Testis (tissue), 5 donors: ENCODE measurements at regions of chr11 and their contacts with region 1.

Region 1: GRCh38 chr11:119356349-119357031 is 10.0 kb upstream of the MFRP start:
- DNase-seq: peak; percentile 89
- H3K4me3 ChIP-seq: peak overlapping the region; percentile 39 to 63
- H3K27ac ChIP-seq: peak overlapping the region; percentile 27 to 69
- H3K4me1 ChIP-seq: peaks cover 21% of the 10 kb centered on the region
- H3K27me3 ChIP-seq: no peaks in the 10 kb centered on the region
- CTCF ChIP-seq: peak; percentile 84 to 88 (median 85)
- POLR2A ChIP-seq: no peak

Region 2: DNA sequence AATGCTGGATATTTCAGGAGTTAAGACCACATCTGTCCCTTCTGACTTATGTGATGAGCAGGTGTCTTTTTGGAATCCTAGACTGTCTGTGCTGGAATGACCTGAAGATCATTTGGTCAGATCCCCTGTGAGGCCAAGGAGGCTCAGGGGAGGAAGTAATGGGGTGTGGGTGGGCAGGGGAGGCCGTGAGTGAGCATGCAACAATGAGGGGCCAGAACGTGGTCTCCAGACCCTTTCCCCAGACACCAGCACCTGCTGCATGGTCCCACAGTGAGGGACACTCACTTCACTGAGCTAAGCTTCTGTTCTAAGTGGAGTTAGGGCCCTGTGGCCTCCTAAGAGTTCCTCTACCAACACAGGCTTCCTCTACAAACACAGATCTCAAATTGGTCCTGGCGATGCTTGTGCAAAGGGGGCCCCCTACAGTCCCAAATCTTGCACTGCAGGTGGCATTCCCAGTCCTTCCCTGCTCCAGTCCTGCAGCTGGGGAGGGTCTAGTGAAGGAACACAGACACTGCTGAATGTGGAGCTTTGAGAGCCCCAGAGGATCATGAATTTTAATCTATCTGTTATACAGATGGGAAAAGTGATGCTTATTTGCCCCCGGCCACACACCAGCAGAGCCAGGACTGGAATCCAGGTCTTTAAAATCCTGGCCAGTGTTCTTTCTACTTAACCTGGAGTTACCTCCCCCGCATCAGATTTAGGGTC is 17.6 kb after region 1 on chr11:
- intact Hi-C with region 1: loop called (anchors 2 kb)
- DNase-seq: peak; percentile 87
- H3K4me3 ChIP-seq: no peak overlapping the region
- H3K27ac ChIP-seq: peak overlapping the region in 1 of 2 donors; percentile 75
- H3K4me1 ChIP-seq: peaks cover 48% of the 10 kb centered on the region
- H3K27me3 ChIP-seq: no peaks in the 10 kb centered on the region
- CTCF ChIP-seq: peak; percentile 69 to 84 (median 82)
- POLR2A ChIP-seq: no peak

Region 3: GRCh38 chr11:119474682-119475596 is 118.4 kb after region 1 on chr11:
- intact Hi-C with region 1: loop called (anchors 10 kb)
- DNase-seq: peak; percentile 83
- H3K4me3 ChIP-seq: no peak overlapping the region
- H3K27ac ChIP-seq: no peak overlapping the region
- H3K4me1 ChIP-seq: no peaks in the 10 kb centered on the region
- H3K27me3 ChIP-seq: no peaks in the 10 kb centered on the region
- CTCF ChIP-seq: peak; percentile 76 to 94 (median 92)
- POLR2A ChIP-seq: no peak

Region 4: DNA sequence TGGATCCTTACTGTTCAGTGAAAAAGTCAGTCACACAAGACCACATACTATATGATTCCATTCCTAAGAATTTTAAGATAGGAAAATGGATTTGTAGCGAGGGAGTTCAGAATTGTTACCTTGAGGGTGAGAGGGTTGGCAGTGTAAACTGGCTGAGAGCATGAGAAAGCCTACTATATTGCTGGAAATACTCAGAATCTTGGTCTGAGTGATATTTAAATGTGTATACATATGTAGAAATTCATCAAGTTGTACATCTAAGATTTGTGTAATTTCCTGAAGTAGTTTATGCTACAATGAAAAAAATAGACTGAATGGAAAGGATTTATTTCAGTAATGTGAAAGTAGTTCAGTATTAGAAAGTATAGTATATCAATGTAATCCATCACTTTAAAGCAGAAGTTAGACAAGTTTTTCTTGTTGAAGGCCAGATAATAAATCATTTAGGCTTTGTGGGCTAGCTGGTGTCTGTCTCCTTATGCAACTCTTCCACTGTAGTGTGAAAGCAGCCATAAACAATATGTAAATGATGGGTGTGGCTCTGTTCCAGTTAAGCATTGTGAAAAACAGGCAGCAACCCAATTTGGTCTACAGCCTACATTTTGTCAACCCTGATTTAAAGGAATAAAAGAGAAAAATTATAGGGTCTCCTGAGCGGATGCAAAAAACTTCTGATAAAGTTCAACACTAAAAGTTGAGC is 193.7 kb after region 1 on chr11:
- intact Hi-C with region 1: no loop called
- DNase-seq: no peak
- H3K4me3 ChIP-seq: no peak overlapping the region
- H3K27ac ChIP-seq: no peak overlapping the region
- H3K4me1 ChIP-seq: no peaks in the 10 kb centered on the region
- H3K27me3 ChIP-seq: no peaks in the 10 kb centered on the region
- CTCF ChIP-seq: no peak
- POLR2A ChIP-seq: no peak